ENCODE measurements at regions of chr11 and their contacts with region 1.

Region 1: GRCh38 chr11:75142714-75143419 is 8.0 kb upstream of the SLCO2B1 start:
- DNase-seq: peak; percentile 63
- H3K4me3 ChIP-seq: no peak overlapping the region
- H3K27ac ChIP-seq: peak overlapping the region; percentile 60 to 61; a peak in 3 of 4 replicates
- H3K4me1 ChIP-seq: peaks cover 10 to 21% of the 10 kb centered on the region in 2 experiments; a peak in 2 of 4 replicates
- H3K27me3 ChIP-seq: no peaks in the 10 kb centered on the region; the same call in 1 of the 2 replicates
- CTCF ChIP-seq: no peak
- EP300 ChIP-seq: no peak; a peak in 1 of 4 replicates
- RAD21 ChIP-seq: no peak; the same call in 1 of the 2 replicates

Region 2: GRCh38 chr11:74929431-74930363 is 213.2 kb before region 1 on chr11:
- CTCF ChIA-PET with region 1: interaction called, 48 read pairs
- POLR2A ChIA-PET with region 1: no interaction called
- DNase-seq: peak; percentile 58
- H3K4me3 ChIP-seq: no peak overlapping the region
- H3K27ac ChIP-seq: no peak overlapping the region; a peak in 1 of 4 replicates
- H3K4me1 ChIP-seq: peaks cover 0 to 12% of the 10 kb centered on the region in 2 experiments; a peak in 2 of 4 replicates
- H3K27me3 ChIP-seq: no peaks in the 10 kb centered on the region
- CTCF ChIP-seq: peak; percentile 95
- EP300 ChIP-seq: no peak
- RAD21 ChIP-seq: peak; percentile 93

Region 3: GRCh38 chr11:75031771-75032549 is 110.9 kb before region 1 on chr11:
- CTCF ChIA-PET with region 1: interaction called, 26 read pairs
- POLR2A ChIA-PET with region 1: no interaction called
- DNase-seq: peak; percentile 68
- H3K4me3 ChIP-seq: no peak overlapping the region
- H3K27ac ChIP-seq: peak overlapping the region in 1 of 2 experiments; percentile 52; a peak in 2 of 4 replicates
- H3K4me1 ChIP-seq: peaks cover 6 to 11% of the 10 kb centered on the region in 2 experiments; a peak in 2 of 4 replicates
- H3K27me3 ChIP-seq: no peaks in the 10 kb centered on the region
- CTCF ChIP-seq: peak; percentile 73
- EP300 ChIP-seq: no peak
- RAD21 ChIP-seq: peak; percentile 75

Region 4: DNA sequence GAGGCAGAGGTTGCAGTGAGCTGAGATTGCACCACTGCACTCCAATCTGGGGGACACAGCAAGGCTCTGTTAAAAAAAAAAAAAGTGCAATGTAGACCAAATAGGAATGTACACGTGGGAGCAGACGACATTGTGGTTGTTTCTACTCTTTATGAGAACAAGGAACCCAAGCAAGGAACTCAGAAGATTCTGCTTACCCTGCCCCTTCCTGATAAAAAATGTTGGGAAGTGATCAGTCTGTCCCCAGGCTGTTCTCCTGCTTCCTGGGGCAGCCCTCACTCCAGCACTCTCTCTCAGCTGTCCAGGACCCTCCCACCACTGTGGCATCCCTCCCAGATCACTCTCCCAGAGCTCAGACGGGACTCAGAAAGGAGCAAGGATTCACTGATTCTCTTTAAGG is 39.8 kb after region 1 on chr11:
- CTCF ChIA-PET with region 1: interaction called, 142 read pairs
- POLR2A ChIA-PET with region 1: no interaction called
- DNase-seq: no peak
- H3K4me3 ChIP-seq: no peak overlapping the region
- H3K27ac ChIP-seq: no peak overlapping the region
- H3K4me1 ChIP-seq: peaks cover 0 to 11% of the 10 kb centered on the region in 2 experiments; a peak in 1 of 4 replicates
- H3K27me3 ChIP-seq: no peaks in the 10 kb centered on the region; the same call in 1 of the 2 replicates
- CTCF ChIP-seq: no peak
- EP300 ChIP-seq: no peak
- RAD21 ChIP-seq: no peak

Region 5: GRCh38 chr11:75223954-75224643 is 81.2 kb after region 1 on chr11:
- CTCF ChIA-PET with region 1: interaction called, 36 read pairs
- POLR2A ChIA-PET with region 1: no interaction called
- DNase-seq: no peak
- H3K4me3 ChIP-seq: no peak overlapping the region
- H3K27ac ChIP-seq: no peak overlapping the region
- H3K4me1 ChIP-seq: peaks cover 0 to 2% of the 10 kb centered on the region in 2 experiments; a peak in 1 of 4 replicates
- H3K27me3 ChIP-seq: 0 out of 2 replicates have a peak, but pooled peaks cover 5% of the 10 kb centered on the region
- CTCF ChIP-seq: no peak
- EP300 ChIP-seq: no peak
- RAD21 ChIP-seq: no peak; the same call in 1 of the 2 replicates

Region 6: DNA sequence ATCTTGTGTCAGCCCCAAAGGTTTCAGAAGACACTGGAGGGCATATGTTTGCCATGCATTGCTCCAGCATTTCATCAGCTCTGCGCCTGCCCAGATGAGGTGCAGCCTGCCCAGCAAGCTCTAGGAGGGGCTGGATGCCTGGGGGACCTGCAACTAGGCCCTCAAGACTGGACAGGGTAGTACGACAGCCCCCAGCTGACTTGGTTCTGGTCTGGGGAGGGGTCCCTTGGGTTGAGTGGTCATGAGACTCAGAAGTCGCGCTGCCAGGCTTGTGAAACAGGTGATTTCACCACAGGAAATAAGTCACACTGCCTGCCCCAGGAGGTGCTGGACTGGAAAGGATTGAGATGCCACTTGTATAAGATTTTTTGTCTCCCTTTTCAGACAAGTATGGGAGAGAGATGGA is 121.1 kb after region 1 on chr11:
- CTCF ChIA-PET with region 1: interaction called, 38 read pairs
- POLR2A ChIA-PET with region 1: no interaction called
- DNase-seq: no peak
- H3K4me3 ChIP-seq: no peak overlapping the region
- H3K27ac ChIP-seq: no peak overlapping the region
- H3K4me1 ChIP-seq: peaks cover 0 to 12% of the 10 kb centered on the region in 2 experiments; a peak in 1 of 4 replicates
- H3K27me3 ChIP-seq: no peaks in the 10 kb centered on the region
- CTCF ChIP-seq: no peak
- EP300 ChIP-seq: no peak
- RAD21 ChIP-seq: no peak

Region 7: GRCh38 chr11:75450826-75451821 is 308.3 kb after region 1 on chr11:
- CTCF ChIA-PET with region 1: no interaction called
- POLR2A ChIA-PET with region 1: no interaction called
- DNase-seq: peak; percentile 68
- H3K4me3 ChIP-seq: no peak overlapping the region
- H3K27ac ChIP-seq: no peak overlapping the region
- H3K4me1 ChIP-seq: no peaks in the 10 kb centered on the region
- H3K27me3 ChIP-seq: no peaks in the 10 kb centered on the region
- CTCF ChIP-seq: peak; percentile 58
- EP300 ChIP-seq: no peak
- RAD21 ChIP-seq: no peak

Measured in SK-N-SH (cell line).